Ascending aorta (tissue), 2 donors: ENCODE measurements at regions of chr13 and their contacts with region 1.

Region 1: DNA sequence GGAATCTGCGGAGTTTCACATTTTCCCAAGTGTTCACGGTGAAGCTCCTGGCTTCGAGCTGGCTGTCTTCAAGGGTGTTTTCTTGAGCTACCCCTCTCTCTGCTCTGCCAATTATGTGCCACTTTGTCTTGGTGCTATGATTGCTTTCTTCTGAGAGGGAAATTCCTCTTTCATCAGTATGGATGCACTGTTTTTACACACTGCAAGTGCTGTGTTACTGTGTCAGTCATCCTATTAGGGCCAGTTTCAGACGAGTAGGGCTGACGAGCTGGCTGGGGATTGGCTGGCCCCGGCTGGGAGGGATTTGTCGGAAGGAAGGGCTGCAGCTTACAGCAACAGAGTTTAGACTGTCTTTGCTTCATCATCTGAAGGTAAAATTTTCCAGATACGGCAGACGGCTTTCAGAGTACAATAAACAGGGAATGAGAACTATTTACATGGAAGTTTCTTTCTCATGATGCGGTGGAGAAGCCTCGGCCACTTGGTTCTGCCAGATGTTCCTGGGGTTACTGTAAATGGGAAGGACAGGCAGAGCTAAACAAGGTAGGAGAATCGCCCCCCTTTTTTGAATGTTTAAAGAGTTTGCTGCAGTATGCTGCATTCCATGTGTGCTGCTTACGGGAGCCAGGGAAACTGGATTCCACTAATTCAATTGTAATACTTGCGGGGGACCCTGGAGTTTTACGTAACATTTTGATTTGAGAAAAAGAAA is at the start of gene MBNL2:
- DNase-seq: peak; percentile 75 to 93
- H3K4me3 ChIP-seq: peak within 1 kb of the TSS; percentile 72 to 78
- H3K27ac ChIP-seq: peak within 1 kb of the TSS; percentile 80 to 83
- H3K4me1 ChIP-seq: peaks cover 0 to 12% of the 10 kb centered on the region in 2 donors
- H3K27me3 ChIP-seq: no peaks in the 10 kb centered on the region
- CTCF ChIP-seq: no peak
- total RNA-seq, gene MBNL2: 38.7 TPM

Region 2: DNA sequence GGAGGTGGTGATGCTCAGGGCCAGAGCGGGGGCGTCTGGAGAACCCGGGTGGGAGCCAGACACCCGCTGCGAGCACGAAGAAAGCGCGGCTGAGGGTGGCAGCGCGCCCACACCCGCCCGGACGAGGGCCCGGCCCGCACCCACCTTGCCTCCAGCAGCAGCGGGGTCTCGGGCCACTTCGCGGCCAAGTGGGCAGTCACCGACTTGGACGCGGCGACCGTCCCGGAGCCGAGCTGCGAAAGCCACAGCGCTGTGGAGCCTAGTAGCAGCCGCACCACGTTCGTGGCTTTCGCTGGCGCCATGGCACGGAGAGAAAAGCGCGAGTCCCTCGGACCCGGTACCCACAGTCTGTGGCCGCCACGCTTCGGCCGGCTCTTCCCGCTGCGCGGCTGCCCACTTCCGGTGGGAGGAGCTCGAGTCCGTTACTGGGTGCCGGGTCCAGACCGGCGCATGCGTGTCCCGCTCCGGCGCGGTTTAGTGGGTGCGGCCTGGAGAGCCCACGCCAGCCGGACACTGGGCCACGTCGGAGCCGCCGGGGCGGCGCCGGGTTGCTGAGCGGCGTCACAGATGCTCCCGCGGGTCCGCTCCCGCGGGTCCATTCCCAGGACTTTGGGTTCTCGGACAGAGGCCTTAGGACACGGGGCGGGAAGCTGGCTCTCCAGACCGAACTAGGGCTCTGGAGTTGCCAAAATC is 1169.0 kb before region 1 on chr13 and contains the start of gene UGGT2:
- intact Hi-C with region 1: loop called (anchors 10 kb)
- DNase-seq: peak; percentile 77 to 96
- H3K4me3 ChIP-seq: peak within 1 kb of the TSS; percentile 73 to 89
- H3K27ac ChIP-seq: peak within 1 kb of the TSS; percentile 81 to 94
- H3K4me1 ChIP-seq: no peaks in the 10 kb centered on the region
- H3K27me3 ChIP-seq: no peaks in the 10 kb centered on the region
- CTCF ChIP-seq: no peak
- total RNA-seq, gene UGGT2: 26.0 TPM

Region 3: GRCh38 chr13:97148894-97149293 is 73.3 kb before region 1 on chr13:
- intact Hi-C with region 1: no loop called
- DNase-seq: no peak
- H3K4me3 ChIP-seq: no peak overlapping the region
- H3K27ac ChIP-seq: no peak overlapping the region
- H3K4me1 ChIP-seq: peaks cover 0 to 4% of the 10 kb centered on the region in 2 donors
- H3K27me3 ChIP-seq: no peaks in the 10 kb centered on the region
- CTCF ChIP-seq: no peak

Region 4: GRCh38 chr13:97257800-97258799 is 36.0 kb after region 1 on chr13:
- intact Hi-C with region 1: loop called (anchors 2 kb)
- DNase-seq: peak; percentile 18 to 87
- H3K4me3 ChIP-seq: no peak overlapping the region
- H3K27ac ChIP-seq: peak overlapping the region; percentile 76 to 79
- H3K4me1 ChIP-seq: peaks cover 12 to 72% of the 10 kb centered on the region in 2 donors
- H3K27me3 ChIP-seq: no peaks in the 10 kb centered on the region
- CTCF ChIP-seq: no peak

Region 5: GRCh38 chr13:97339019-97339987 is 117.2 kb after region 1 on chr13:
- intact Hi-C with region 1: loop called (anchors 1 kb)
- DNase-seq: peak in 1 of 2 donors; percentile 85
- H3K4me3 ChIP-seq: peak overlapping the region in 1 of 2 donors; percentile 41
- H3K27ac ChIP-seq: peak overlapping the region; percentile 79 to 83
- H3K4me1 ChIP-seq: peaks cover 0 to 27% of the 10 kb centered on the region in 2 donors
- H3K27me3 ChIP-seq: no peaks in the 10 kb centered on the region
- CTCF ChIP-seq: no peak

Region 6: GRCh38 chr13:97460004-97460775 is 238.0 kb after region 1 on chr13:
- intact Hi-C with region 1: no loop called
- DNase-seq: no peak
- H3K4me3 ChIP-seq: no peak overlapping the region
- H3K27ac ChIP-seq: no peak overlapping the region
- H3K4me1 ChIP-seq: peaks cover 0 to 2% of the 10 kb centered on the region in 2 donors
- H3K27me3 ChIP-seq: no peaks in the 10 kb centered on the region
- CTCF ChIP-seq: no peak

Region 7: GRCh38 chr13:97781891-97782305 is 559.8 kb after region 1 on chr13:
- intact Hi-C with region 1: loop called (anchors 10 kb)
- DNase-seq: peak; percentile 16 to 84
- H3K4me3 ChIP-seq: no peak overlapping the region
- H3K27ac ChIP-seq: peak overlapping the region; percentile 74 to 87
- H3K4me1 ChIP-seq: peaks cover 0 to 17% of the 10 kb centered on the region in 2 donors
- H3K27me3 ChIP-seq: no peaks in the 10 kb centered on the region
- CTCF ChIP-seq: no peak